Motor neuron (in vitro differentiated cells): ENCODE measurements at regions of chr13 and their contacts with region 1.

Region 1: GRCh38 chr13:95834134-95834765 is 157.3 kb downstream of the DNAJC3 start:
- ATAC-seq: peak; percentile 58 to 87 (median 74)
- H3K4me3 ChIP-seq: no peak overlapping the region
- H3K27ac ChIP-seq: no peak overlapping the region
- H3K4me1 ChIP-seq: no peaks in the 10 kb centered on the region

Region 2: DNA sequence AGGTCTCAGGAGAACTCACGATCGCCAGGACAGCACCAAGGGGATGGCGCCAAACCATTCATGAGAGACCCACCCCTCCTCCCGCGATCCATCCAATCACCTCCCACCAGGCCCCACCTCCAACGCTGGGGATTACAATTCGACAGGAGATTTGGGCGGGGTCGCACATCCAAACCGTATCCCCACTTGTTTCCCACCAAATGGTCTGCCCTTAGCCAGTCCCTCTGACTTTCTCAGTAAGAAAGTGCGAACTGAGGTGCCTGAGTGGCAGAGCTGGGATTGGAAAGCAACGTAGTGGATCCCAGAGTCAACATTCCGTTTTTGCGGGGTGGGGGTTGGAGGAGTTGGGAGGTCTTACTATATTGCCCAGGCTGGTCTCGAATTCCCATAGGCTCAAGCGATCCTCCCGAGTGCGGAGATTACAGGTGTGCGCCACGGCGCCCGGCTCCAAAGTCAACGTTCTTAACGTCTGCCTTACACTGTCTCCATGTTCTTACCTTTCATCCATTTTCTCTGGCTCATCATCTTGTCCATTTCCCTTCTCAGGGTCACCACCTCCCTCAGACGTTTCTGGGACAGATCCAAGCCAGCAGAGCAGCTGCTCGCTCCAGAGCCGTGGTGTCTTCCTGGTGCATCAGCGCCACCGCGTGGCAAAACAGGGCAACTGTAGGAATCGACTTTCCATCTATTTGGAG is 430.3 kb before region 1 on chr13:
- in situ Hi-C with region 1: loop called in 1 of 9 experiments (anchors 25 kb)
- ATAC-seq: peak; percentile 95 to 98 (median 97)
- H3K4me3 ChIP-seq: peak overlapping the region in 3 of 5 donors; percentile 11 to 22 (median 12)
- H3K27ac ChIP-seq: no peak overlapping the region
- H3K4me1 ChIP-seq: no peaks in the 10 kb centered on the region

Region 3: DNA sequence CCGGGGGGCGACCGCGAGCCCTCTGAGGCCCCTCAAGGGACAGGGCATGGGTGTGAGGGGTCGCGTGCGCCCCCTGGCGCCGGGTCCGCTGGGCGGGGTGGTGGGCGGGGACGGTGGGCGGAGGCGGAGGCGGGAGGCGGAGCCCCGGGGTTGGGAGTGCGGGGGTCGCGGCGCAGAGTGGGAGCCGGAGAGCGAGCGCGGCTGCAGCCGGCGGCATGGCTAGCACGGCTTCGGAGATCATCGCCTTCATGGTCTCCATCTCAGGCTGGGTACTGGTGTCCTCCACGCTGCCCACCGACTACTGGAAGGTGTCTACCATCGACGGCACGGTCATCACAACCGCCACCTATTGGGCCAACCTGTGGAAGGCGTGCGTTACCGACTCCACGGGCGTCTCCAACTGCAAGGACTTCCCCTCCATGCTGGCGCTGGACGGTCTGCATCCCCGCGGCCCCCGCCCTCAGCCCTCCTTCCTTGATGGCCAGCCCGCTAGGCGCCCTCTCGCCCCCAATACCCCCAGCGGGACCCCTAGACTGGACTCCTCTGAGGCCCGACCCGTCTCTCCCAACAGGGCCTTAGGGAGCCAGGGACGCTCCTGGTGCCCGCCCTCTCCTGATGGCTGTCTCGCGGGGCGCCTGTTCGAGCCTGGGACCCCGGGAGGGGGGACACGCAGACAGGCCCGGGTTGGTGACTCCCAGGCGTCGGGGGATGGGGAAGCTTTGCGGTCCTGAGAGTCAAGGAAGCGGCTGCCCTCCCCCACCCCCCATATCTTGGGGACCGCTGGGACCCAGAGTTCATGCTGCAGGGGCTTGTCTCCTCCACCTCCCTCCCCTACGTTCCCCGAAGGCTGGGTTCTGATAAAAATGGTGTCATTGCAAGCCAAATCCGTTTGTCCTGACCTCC is 281.5 kb before region 1 on chr13 and contains the start of gene CLDN10:
- in situ Hi-C with region 1: loop called in 1 of 9 experiments (anchors 25 kb)
- ATAC-seq: peak in 6 of 8 experiments; percentile 53 to 93 (median 83)
- H3K4me3 ChIP-seq: peak within 1 kb of the TSS; percentile 25 to 40 (median 26)
- H3K27ac ChIP-seq: no peak within 1 kb of the TSS
- H3K4me1 ChIP-seq: peaks cover 0 to 8% of the 10 kb centered on the region in 2 donors
- total RNA-seq, gene CLDN10: 0.58 to 8.9 (median 1.7) TPM in 6 of 8 experiments, not detected in the others

Region 4: DNA sequence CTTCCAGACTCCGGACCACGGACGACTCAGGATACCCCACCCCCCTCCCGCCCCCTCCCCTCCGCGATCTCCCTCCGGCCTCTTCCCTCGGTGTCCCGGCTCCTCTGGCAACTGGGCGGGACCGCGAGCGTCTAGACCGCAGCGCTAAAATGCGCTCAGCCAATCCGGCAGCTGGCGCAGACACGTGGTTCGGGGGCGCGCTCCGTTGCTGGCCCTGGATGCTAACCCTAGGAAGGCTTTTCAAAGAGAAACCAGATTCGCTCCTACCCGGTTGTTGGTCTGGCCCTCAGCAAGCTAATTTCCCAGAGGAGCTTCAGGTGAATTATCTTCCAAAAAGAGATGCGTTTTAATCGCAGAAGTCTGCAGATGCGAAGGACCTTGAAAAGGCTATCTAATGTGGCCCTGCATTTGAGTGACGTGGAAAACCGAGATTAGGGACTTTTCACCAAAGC is 189.6 kb before region 1 on chr13 and contains the start of gene DZIP1:
- in situ Hi-C with region 1: loop called in 1 of 9 experiments (anchors 25 kb)
- ATAC-seq: peak; percentile 77 to 88 (median 82)
- H3K4me3 ChIP-seq: peak within 1 kb of the TSS; percentile 48 to 96 (median 77)
- H3K27ac ChIP-seq: peak within 1 kb of the TSS; percentile 56 to 74
- H3K4me1 ChIP-seq: peaks cover 9 to 20% of the 10 kb centered on the region in 2 donors
- total RNA-seq, gene DZIP1: 21.5 to 61.3 (median 37.2) TPM

Region 5: GRCh38 chr13:95660981-95661581 is 173.2 kb before region 1 on chr13:
- in situ Hi-C with region 1: loop called in 1 of 9 experiments (anchors 25 kb)
- ATAC-seq: peak in 2 of 8 experiments; percentile 26 to 30
- H3K4me3 ChIP-seq: no peak overlapping the region
- H3K27ac ChIP-seq: no peak overlapping the region
- H3K4me1 ChIP-seq: no peaks in the 10 kb centered on the region